Activated naive CD4-positive, alpha-beta T cell treated with anti-CD3 and anti-CD28 coated beads for 36 hours (primary cell): ENCODE measurements at regions of chr18 and their contacts with region 1.

Region 1: DNA sequence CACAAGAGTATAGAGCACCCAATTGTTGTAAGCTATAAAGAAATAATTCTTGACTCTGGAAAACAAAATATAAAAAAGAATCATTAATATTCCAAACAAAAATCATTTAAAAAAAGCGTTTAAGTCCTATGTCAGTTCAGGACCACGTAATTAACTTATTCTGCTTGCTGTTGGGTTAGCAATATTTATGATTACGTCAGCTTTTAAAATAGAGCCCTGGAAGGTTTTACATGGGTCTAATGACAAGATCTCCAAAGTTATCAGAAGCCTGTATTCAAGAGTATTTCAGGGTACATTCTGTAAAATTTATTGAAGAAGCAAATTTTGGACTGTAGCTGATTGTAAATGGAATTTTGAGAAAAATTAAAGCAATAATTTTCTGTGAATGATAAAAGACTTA is 521.6 kb downstream of the DCC start:
- DNase-seq: no peak
- H3K4me3 Mint-ChIP-seq: no peak overlapping the region
- H3K27ac Mint-ChIP-seq: no peak overlapping the region
- H3K4me1 Mint-ChIP-seq: no peaks in the 10 kb centered on the region
- H3K27me3 Mint-ChIP-seq: no peaks in the 10 kb centered on the region

Region 2: GRCh38 chr18:52694804-52695203 is 166.8 kb before region 1 on chr18:
- CTCF ChIA-PET with region 1: no interaction called
- intact Hi-C with region 1: no loop called
- DNase-seq: peak; percentile 5
- H3K4me3 Mint-ChIP-seq: no peak overlapping the region
- H3K27ac Mint-ChIP-seq: no peak overlapping the region
- H3K4me1 Mint-ChIP-seq: no peaks in the 10 kb centered on the region
- H3K27me3 Mint-ChIP-seq: peaks cover 3% of the 10 kb centered on the region

Region 3: DNA sequence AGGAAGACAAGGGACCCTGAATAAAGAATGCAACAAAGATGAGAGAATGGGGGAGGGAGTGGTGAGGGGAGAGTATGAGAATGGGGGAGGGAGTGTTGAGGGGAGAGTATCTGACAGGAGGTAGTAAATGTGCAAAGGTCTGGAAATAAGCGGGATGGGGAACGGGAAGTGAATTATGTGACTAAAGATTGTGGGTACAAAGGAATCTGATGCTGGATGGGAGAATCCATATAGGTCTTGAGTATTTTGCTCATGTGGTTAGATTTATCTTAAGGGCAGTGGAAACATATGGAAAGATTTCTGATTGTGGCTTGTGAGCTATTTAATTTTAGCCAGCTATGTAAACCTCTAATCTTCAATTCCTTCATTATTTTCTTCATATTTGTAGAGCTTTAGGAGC is 71.8 kb after region 1 on chr18:
- CTCF ChIA-PET with region 1: no interaction called
- intact Hi-C with region 1: loop called (anchors 2 kb)
- DNase-seq: no peak
- H3K4me3 Mint-ChIP-seq: no peak overlapping the region
- H3K27ac Mint-ChIP-seq: no peak overlapping the region
- H3K4me1 Mint-ChIP-seq: no peaks in the 10 kb centered on the region
- H3K27me3 Mint-ChIP-seq: no peaks in the 10 kb centered on the region